T-cell (primary cell): ENCODE measurements at regions of chr3 and their contacts with region 1.

Region 1: DNA sequence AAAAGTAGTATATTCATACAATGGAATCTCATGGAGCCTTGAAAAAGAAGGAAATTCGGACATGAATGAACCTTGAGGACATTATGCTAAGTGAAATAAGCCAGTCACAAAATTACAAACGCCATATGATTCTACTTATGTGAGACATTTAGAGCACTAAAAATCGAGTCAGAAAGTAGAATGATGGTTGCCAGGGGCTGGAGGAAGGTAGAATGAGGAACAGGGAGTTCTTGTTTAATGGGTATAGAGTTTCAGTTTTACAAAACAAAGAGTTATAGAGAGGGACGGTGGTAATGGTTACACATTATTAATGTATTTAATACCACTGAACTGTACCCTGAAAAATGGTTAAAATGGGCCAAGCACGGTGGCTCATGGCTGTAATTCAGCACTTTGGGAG is 19.5 kb downstream of the UBXN7 start:
- DNase-seq: no peak
- ATAC-seq: no peak
- H3K4me3 ChIP-seq: no peak overlapping the region
- H3K4me3 Mint-ChIP-seq: no peak overlapping the region
- H3K27ac ChIP-seq: no peak overlapping the region
- H3K27ac Mint-ChIP-seq: no peak overlapping the region
- H3K4me1 ChIP-seq: peaks cover 2 to 6% of the 10 kb centered on the region in 2 experiments
- H3K4me1 Mint-ChIP-seq: peaks cover 43 to 46% (median 45%) of the 10 kb centered on the region in 3 donors
- H3K27me3 ChIP-seq: no peaks in the 10 kb centered on the region
- H3K27me3 Mint-ChIP-seq: no peaks in the 10 kb centered on the region

Region 2: GRCh38 chr3:195356151-195357086 is 1056.3 kb before region 1 on chr3:
- CTCF ChIA-PET with region 1: no interaction called
- POLR2A ChIA-PET with region 1: interaction called in 1 of 2 experiments, 15 read pairs
- DNase-seq: no peak
- ATAC-seq: no peak
- H3K4me3 ChIP-seq: no peak overlapping the region
- H3K4me3 Mint-ChIP-seq: no peak overlapping the region
- H3K27ac ChIP-seq: no peak overlapping the region
- H3K27ac Mint-ChIP-seq: no peak overlapping the region
- H3K4me1 ChIP-seq: peaks cover 0 to 5% of the 10 kb centered on the region in 2 experiments
- H3K4me1 Mint-ChIP-seq: peaks cover 42 to 51% (median 48%) of the 10 kb centered on the region in 3 donors
- H3K27me3 ChIP-seq: no peaks in the 10 kb centered on the region
- H3K27me3 Mint-ChIP-seq: no peaks in the 10 kb centered on the region